ENCODE measurements at regions of chr6 and their contacts with region 1.

Region 1: GRCh38 chr6:105363100-105363754 is 39.7 kb downstream of the PREP start:
- DNase-seq: no peak

Region 2: GRCh38 chr6:104921896-104922295 is 441.3 kb before region 1 on chr6:
- intact Hi-C with region 1: no loop called
- DNase-seq: no peak

Region 3: DNA sequence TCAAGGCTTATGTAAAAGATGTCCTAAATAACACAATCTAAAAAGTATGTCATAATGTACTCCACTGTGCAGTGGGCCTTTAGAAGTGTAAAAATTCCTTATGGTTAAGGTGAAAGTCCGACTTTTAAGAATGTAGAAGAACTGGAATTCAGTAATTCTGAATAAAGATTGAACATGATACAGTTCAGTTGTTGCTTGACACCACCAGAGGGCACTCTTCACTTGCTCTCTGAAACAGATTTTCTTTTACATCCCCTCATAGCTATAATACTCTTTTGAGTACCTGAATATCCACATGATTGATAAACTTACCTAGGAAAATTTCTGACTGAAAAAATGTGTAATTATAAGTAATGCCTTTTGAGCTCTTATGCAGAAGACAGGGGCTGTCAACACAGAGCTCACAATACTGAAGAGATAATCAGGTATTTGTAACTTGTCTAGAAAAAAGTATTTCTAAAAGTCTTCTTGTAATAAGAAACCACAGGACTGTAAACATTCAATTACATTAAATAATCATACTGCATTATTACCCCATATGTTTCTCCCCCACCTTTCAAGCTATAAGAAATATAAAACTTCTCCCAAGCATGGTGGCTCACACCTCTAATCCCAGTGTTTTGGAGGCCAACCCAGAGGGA is 275.5 kb before region 1 on chr6:
- intact Hi-C with region 1: loop called (anchors 2 kb)
- DNase-seq: no peak

Region 4: GRCh38 chr6:105136431-105137350 is 226.5 kb before region 1 on chr6:
- intact Hi-C with region 1: loop called (anchors 5 kb)
- DNase-seq: peak; percentile 81

Region 5: GRCh38 chr6:105263685-105264610 is 99.3 kb before region 1 on chr6:
- intact Hi-C with region 1: loop called (anchors 10 kb)
- DNase-seq: no peak

Region 6: DNA sequence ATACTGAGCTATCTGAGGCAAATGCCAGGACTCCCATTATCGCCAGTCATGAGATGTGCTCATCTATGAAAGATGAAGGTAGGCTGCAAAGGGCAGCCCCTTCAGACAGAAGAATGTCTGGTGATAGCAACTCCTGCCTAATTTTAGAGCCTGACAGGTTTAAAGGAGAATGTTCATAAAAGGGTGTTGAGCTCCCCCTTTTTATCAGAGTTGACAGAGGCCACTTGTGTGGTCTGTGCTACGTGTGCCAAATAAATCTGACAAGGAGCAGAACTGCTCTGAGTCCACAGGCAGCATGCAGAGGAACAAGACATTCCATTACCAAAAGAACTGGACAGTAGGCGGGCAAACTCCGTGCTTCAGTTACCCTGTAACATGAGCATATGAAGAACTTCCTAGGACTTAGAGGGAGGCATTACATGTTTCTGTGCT is 62.1 kb before region 1 on chr6:
- intact Hi-C with region 1: no loop called
- DNase-seq: no peak

Region 7: GRCh38 chr6:105326833-105327770 is 36.1 kb before region 1 on chr6:
- intact Hi-C with region 1: no loop called
- DNase-seq: no peak

Region 8: DNA sequence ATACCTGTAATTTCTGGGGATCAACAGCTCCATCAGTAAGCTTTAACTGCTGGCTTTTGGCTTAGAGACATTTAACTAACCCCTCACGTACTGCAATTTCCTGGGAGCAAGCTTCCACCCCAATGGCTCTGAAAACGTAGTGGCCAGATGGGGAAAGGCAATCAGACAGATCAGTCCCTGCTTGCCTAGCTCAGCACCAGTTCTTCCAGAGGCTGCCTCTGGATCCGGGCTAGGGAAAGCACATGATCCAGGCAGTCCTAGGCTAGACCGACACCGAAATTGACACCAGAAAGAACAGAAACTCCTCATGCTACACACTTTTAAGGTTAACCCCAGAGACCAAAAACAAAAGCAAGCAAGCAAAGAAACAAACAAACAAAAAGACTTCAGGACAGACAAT is 26.3 kb after region 1 on chr6:
- intact Hi-C with region 1: no loop called
- DNase-seq: no peak